ENCODE measurements at regions of chr1 and their contacts with region 1.

Region 1: DNA sequence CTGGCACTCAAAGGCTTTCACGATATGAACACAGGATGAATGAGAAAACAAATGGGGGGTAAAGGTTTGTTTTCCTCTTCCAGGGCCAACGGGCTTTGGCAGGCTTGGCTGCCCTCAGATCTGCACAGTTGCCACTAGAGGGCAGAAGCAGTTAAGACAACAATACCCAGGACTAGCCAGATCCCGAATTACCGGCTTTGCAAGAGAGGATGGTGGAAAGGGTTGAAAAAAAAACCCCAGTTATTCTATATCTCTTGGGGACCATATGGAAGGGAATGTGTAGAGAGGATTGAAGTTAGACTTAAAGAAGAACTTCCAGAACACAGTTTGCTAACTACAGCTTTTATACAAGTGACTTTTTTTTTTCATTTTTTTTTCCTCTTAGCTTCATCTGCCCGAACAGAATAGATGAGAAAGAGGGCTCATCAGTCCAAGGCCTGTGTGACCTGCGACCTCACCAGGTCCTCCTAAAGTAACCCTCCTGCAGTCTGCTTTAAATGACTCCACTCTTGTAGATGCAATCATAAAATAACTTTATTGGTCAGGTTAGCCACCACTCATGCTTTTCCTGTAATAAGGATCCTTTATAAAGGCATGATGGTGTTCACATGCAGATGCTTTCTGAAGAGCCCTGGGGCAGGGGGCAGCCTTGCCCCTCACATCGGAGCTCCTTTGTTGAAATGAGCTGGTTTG is 10.7 kb downstream of the FMOD start:
- DNase-seq: peak; percentile 78
- H3K4me3 Mint-ChIP-seq: no peak overlapping the region
- H3K27ac Mint-ChIP-seq: no peak overlapping the region
- H3K4me1 Mint-ChIP-seq: peaks cover 21% of the 10 kb centered on the region
- H3K27me3 Mint-ChIP-seq: peaks cover 4% of the 10 kb centered on the region

Region 2: DNA sequence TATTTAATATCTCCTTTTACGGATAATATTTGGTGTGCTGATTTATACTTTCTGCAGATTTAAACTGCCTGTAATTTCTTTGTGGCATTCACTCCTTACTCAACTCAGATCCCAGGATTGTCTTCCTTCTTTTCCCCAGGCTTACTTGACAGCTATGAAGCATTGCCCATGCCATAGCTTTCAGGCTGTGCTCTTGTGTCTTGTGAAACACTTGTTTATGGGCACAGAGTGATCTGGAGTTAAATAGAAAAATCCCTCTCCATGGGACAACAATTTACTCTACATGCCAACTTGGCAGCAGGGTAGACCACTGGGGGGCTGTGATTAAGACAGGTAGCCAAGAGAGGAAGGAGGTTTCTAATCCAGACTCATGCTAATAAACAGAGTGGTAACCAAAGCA is 934.3 kb before region 1 on chr1:
- CTCF ChIA-PET with region 1: no interaction called
- intact Hi-C with region 1: no loop called
- DNase-seq: no peak
- H3K4me3 Mint-ChIP-seq: no peak overlapping the region
- H3K27ac Mint-ChIP-seq: no peak overlapping the region
- H3K4me1 Mint-ChIP-seq: peaks cover 23% of the 10 kb centered on the region
- H3K27me3 Mint-ChIP-seq: no peaks in the 10 kb centered on the region

Region 3: DNA sequence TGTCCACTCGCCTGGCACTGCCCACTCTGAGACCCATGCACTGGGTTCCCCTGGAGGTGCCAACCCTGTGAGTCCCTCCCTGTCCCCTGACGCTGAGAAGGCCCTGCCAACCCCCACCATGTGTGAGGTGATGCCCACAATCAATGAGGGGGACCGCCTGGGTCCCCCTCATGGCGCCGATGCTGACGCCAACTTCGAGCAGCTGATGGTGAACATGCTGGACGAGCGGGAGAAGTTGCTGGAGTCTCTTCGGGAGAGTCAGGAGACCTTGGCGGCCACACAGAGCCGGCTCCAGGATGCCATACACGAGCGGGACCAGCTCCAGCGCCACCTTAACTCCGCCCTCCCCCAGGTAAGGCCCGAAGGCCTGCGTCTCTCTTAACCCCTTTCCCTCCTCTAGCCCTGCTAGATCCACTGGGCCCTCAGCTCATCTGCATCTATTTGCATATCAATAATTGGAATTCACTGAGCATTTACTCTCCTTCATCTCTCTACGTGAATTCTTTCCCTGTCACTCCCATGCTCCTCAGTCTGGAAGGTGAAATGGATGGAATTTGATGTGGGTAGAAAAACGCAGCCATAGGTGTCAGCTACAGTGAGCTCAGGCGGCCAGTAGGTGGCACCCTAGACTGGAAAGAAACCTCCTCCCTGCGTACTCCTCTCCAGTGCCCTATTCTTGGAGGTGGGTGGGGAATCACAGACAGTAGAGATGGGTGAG is 301.2 kb before region 1 on chr1:
- CTCF ChIA-PET with region 1: interaction called, 5 read pairs
- intact Hi-C with region 1: loop called (anchors 5 kb)
- DNase-seq: peak; percentile 82
- H3K4me3 Mint-ChIP-seq: no peak overlapping the region
- H3K27ac Mint-ChIP-seq: no peak overlapping the region
- H3K4me1 Mint-ChIP-seq: no peaks in the 10 kb centered on the region
- H3K27me3 Mint-ChIP-seq: peaks cover 2% of the 10 kb centered on the region

Region 4: GRCh38 chr1:203304919-203305808 is 35.1 kb before region 1 on chr1 and contains the start of gene BTG2:
- CTCF ChIA-PET with region 1: interaction called, 93 read pairs
- intact Hi-C with region 1: no loop called
- DNase-seq: peak; percentile 96
- H3K4me3 Mint-ChIP-seq: peak within 1 kb of the TSS; percentile 97
- H3K27ac Mint-ChIP-seq: peak within 1 kb of the TSS; percentile 99
- H3K4me1 Mint-ChIP-seq: peaks cover 56% of the 10 kb centered on the region
- H3K27me3 Mint-ChIP-seq: no peaks in the 10 kb centered on the region
- total RNA-seq, gene BTG2: 106 to 109 TPM

Region 5: DNA sequence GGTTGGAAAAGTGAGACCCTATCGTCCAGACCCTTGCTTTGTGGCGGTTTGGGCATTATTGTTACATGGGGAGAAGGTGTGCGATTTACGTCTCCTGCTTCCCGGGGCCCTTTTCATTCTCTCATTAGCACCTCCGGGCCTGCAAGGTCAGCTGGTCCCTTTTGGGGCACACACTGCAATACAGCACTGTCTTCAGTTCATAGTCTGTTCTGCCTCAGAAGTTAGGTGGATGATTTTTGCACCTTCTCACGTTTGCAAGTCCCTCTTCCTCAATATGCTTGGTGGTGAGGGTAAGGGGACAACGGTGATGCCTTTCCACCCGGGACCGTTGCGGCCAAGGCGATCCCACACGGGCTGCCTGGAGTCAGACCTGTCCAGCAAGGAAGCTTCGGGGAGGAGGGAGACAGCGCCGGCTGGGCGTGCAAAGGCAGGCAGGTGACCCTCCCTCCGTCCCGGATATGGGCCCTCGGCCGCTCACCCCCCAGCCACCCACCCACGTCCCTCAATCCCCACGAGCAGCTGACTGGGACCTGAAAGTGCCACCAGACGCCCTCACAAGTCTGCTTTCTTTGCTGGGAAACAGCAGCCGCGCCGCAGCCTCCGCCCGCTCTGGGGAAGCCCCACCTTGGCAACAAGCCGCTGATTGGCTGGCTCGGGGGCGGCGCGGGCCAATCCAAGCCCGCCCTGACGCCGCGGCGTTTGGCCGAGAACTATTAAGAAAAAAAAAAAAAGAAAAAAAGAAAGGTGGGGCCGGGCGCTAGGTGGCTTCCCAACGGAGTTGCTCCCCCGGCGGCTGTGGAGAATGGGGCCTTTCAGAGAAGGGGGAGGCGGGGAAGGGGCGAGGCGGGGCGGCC is 13.2 kb before region 1 on chr1:
- CTCF ChIA-PET with region 1: interaction called, 88 read pairs
- intact Hi-C with region 1: loop called (anchors 1 kb)
- DNase-seq: peak; percentile 96
- H3K4me3 Mint-ChIP-seq: peak overlapping the region; percentile 76
- H3K27ac Mint-ChIP-seq: peak overlapping the region; percentile 90
- H3K4me1 Mint-ChIP-seq: peaks cover 53% of the 10 kb centered on the region
- H3K27me3 Mint-ChIP-seq: no peaks in the 10 kb centered on the region

Region 6: DNA sequence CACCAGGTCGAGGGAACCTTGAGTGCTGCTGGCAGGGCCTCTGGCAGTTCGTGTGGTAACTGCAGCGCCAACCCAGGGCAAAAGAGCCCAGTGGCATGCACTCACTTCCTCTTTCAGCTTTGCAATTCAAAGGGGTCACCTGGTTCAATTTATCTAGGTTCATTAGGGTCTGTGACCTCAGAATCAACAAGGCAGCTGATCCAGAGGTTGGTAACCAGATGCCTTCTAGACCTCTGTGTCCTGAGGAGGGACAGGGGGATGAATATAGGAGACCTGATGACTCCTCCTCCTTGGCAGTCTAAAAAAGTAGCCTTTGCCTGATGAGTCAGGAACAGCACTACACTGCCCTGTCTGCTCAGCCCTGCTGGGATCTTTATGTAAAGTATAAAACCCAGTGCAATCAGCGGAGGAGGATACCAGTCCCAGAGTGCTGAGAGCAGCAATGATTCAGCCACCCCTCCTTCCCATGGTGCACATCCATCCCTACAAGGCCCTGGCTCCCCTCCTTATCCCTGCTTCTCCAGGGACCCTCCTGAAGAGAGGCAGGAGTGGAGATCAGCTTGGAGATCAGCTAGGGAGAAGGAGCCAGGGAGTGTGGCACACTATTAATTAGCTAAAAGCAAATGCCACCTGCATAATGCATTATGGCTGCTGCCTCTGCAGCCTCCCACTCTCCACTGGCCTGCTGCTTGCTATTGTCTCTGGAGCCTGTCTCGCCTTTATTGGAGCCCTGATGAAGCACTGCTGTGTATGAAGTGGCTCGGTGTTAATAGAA is 21.9 kb after region 1 on chr1:
- CTCF ChIA-PET with region 1: interaction called, 22 read pairs
- intact Hi-C with region 1: no loop called
- DNase-seq: no peak
- H3K4me3 Mint-ChIP-seq: no peak overlapping the region
- H3K27ac Mint-ChIP-seq: no peak overlapping the region
- H3K4me1 Mint-ChIP-seq: no peaks in the 10 kb centered on the region
- H3K27me3 Mint-ChIP-seq: peaks cover 16% of the 10 kb centered on the region

Region 7: DNA sequence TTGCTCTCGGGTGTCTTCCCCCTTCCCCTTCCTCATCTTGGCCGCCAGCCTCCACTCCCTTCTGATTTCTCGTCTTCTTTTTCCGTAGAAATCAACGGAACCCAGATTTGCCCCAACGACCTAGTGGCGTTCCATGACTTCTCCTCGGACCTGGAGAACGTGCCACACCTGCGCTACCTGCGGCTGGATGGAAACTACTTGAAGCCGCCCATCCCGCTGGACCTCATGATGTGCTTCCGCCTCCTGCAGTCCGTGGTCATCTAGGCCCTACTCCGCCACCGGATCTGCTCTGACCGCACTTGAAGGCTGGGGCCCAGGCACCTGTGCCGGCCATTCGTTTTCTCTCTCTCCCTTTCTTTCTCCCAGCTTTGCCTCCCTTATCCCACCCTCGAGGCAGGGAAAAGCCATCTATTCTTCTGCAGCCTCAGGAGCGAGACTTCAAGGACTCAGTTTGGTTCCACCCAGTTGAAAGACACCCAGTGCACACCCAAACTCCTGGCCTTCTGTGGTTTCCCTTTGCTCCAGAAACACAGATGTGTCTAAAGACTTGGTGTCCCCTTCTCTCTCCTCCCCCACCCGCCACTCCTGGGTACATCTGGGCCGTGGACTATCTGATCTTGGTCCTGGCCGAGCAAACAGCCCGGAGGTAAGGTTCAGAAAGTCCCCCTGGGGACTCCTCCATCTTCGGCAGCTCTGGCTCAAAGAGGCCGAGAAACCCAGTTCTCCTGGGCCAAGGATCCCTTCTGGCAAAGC is 146.5 kb after region 1 on chr1:
- CTCF ChIA-PET with region 1: interaction called, 168 read pairs
- intact Hi-C with region 1: loop called (anchors 1 kb)
- DNase-seq: no peak
- H3K4me3 Mint-ChIP-seq: peak overlapping the region; percentile 67
- H3K27ac Mint-ChIP-seq: no peak overlapping the region
- H3K4me1 Mint-ChIP-seq: peaks cover 6% of the 10 kb centered on the region
- H3K27me3 Mint-ChIP-seq: no peaks in the 10 kb centered on the region

Region 8: DNA sequence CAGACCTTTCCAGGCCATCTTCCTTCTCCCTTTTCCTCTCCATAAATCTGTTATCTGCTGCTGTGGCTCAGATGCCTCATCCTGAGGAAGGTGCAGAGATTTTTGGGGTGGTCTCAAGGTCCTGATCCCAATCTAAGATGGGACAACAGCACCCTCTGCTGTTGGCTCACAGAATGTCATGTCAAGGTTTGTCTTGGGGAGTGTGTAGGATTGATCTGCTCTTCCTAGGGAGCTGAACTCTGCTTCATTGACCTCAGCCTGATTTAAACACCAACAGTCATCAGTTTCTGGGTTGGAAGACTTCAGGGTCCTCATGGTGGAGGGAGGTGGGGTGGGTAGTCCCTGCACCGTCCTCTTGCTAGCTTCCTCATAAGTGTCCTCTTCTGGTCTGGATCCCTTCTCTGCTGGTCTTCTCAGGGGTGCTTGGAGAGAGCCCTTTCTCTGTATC is 361.9 kb after region 1 on chr1:
- CTCF ChIA-PET with region 1: interaction called, 5 read pairs
- intact Hi-C with region 1: loop called (anchors 1 kb)
- DNase-seq: peak; percentile 80
- H3K4me3 Mint-ChIP-seq: no peak overlapping the region
- H3K27ac Mint-ChIP-seq: peak overlapping the region; percentile 67
- H3K4me1 Mint-ChIP-seq: no peaks in the 10 kb centered on the region
- H3K27me3 Mint-ChIP-seq: no peaks in the 10 kb centered on the region